HAP-1 (cell line): ENCODE measurements at regions of chr13 and their contacts with region 1.

Region 1: GRCh38 chr13:26971990-26972887 is 199.4 kb downstream of the USP12 start:
- DNase-seq: peak in 1 of 2 experiments; percentile 49
- H3K4me3 ChIP-seq: no peak overlapping the region
- H3K4me1 ChIP-seq: no peaks in the 10 kb centered on the region
- H3K27me3 ChIP-seq: no peaks in the 10 kb centered on the region

Region 2: GRCh38 chr13:27997904-27998522 is 1025.8 kb after region 1 on chr13:
- in situ Hi-C with region 1: loop called (anchors 25 kb)
- DNase-seq: peak; percentile 59 to 72
- H3K4me3 ChIP-seq: no peak overlapping the region
- H3K4me1 ChIP-seq: no peaks in the 10 kb centered on the region
- H3K27me3 ChIP-seq: no peaks in the 10 kb centered on the region